ENCODE measurements at regions of chr16 and their contacts with region 1.

Region 1: DNA sequence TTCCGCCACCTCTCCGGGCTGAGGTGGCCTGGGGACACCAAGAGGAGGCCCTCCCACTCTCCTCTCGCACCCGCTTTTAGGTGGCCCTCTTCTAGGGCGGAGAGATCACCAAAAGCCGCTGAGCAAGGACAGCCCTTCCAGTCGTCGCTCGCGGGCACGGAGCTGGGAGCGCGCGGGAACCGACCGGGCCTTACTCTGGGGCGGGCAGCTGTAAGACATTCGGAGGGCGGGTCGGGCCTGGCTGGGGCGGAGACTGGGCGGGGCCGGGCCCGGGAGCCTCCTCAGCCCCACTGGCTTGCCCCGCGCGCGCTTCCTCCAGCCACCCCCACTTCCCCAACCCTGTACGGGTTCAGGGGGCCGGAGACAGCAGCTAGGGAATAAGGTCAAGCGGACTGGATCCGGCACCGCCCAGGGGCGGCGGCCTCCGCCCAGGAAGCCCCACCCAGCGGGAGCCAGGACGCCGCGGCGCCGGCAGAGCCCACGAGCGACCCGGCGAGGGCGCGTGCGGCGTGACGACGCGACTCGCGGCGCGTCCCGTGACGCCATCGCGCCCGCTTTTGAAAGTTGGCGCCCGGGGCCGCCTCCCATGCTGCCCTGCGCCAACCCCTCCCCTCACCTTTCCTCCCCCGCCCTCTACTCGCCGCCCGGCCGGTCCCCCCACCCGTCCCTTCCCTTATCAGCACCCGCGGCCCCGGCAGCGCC is 351 bp upstream of the CTCF start:
- DNase-seq: peak; percentile 96 to 98
- ATAC-seq: peak; percentile 83

Region 2: GRCh38 chr16:67461600-67462592 is 100.1 kb before region 1 on chr16:
- intact Hi-C with region 1: no loop called
- DNase-seq: peak; percentile 87 to 97
- ATAC-seq: peak; percentile 64

Region 3: GRCh38 chr16:67632415-67633172 is 70.6 kb after region 1 on chr16:
- intact Hi-C with region 1: no loop called
- DNase-seq: no peak
- ATAC-seq: no peak

Region 4: DNA sequence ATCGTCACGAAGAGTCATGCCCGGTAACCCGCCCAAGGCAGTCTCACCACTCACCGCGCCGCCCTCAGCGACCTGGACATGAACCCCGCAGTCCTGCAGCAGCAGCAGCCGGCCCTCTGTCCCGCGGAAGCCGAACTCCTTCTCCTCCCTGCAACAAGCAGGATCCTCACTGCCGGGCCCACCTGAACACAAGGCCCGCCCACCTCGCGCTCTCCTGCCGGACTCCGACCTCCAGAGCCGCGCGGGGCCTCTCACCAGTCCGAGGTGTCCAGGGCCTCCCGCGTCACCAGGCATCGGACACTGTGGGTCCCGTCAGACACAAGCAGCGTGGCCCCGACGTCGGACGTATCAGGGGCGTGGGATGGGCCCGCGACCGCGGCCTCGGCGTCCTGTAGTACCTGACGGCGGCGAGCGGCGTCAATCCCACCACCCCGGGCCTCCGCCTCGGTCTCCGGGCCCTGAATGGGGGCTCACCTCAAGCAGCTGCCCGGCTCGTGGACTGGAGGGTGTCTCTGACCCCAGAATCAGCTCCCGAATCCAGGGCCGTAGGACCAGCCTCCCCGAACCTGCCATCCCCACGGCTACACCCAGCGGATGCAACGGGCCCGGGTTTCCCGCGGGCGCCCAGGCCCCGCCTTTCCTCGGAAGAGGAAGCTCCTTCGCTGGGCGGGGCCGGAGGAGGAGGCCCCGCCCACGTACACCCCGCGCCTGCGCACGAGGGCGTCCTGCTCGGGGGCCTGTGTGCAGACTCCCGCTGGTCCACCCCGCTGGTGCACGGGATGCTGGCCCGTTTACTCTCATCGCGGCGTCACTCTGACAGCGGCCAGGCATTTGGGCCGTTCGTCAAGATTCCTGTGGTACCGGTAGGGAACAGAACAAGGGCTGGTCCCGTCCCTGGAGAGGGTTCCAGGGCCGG is 97.9 kb after region 1 on chr16 and contains the start of gene ACD:
- intact Hi-C with region 1: loop called in 1 of 2 experiments (anchors 10 kb)
- DNase-seq: peak; percentile 88 to 90
- ATAC-seq: peak; percentile 88
- total RNA-seq, gene ACD: 8.8 to 9.7 TPM